ENCODE measurements at regions of chr7 and their contacts with region 1.

Region 1: GRCh38 chr7:130205084-130205947 is at the start of gene TMEM209:
- DNase-seq: peak; percentile 96
- ATAC-seq: peak; percentile 99
- total RNA-seq, gene TMEM209: 8.6 TPM

Region 2: GRCh38 chr7:130440527-130441365 is 235.4 kb after region 1 on chr7 and contains the start of gene CEP41:
- intact Hi-C with region 1: loop called (anchors 5 kb)
- DNase-seq: peak; percentile 98
- ATAC-seq: peak; percentile 98
- total RNA-seq, gene CEP41: 3.8 TPM